A673 (cell line): ENCODE measurements at regions of chr7 and their contacts with region 1.

Region 1: GRCh38 chr7:98021588-98022351 is 31.8 kb upstream of the OCM2 start:
- DNase-seq: peak; percentile 79
- H3K4me3 ChIP-seq: no peak overlapping the region
- H3K27ac ChIP-seq: no peak overlapping the region
- H3K4me1 ChIP-seq: no peaks in the 10 kb centered on the region
- H3K27me3 ChIP-seq: no peaks in the 10 kb centered on the region
- CTCF ChIP-seq: peak; percentile 96

Region 2: DNA sequence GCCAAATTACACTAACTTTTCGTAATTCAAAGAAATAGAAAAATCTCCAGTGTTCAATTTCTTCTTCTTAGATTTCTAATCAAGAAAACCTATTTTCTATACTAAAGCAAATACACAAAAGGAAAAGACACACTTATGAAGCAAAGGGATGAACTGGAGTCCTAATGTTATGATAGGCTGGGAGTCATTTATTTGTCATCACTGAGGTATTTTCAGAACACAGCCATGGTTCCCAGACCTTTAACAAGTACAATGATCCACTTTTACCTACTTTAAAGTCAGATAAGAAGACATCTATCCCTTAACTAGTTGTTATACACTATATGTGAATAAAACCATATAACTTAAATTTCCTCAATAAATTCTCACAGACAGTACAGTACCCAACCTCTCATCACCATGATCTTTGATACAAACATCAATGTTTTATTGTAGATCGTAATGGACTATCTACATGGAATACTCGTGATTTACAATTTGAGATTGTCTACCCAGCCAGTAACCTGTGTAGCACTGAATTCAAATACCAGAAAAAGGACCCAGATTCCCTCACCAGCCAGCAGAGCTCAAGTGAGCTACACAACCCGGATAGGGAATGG is 162.1 kb before region 1 on chr7:
- CTCF ChIA-PET with region 1: no interaction called
- POLR2A ChIA-PET with region 1: no interaction called
- intact Hi-C with region 1: no loop called
- DNase-seq: no peak
- H3K4me3 ChIP-seq: no peak overlapping the region
- H3K27ac ChIP-seq: no peak overlapping the region
- H3K4me1 ChIP-seq: no peaks in the 10 kb centered on the region
- H3K27me3 ChIP-seq: no peaks in the 10 kb centered on the region
- CTCF ChIP-seq: no peak

Region 3: DNA sequence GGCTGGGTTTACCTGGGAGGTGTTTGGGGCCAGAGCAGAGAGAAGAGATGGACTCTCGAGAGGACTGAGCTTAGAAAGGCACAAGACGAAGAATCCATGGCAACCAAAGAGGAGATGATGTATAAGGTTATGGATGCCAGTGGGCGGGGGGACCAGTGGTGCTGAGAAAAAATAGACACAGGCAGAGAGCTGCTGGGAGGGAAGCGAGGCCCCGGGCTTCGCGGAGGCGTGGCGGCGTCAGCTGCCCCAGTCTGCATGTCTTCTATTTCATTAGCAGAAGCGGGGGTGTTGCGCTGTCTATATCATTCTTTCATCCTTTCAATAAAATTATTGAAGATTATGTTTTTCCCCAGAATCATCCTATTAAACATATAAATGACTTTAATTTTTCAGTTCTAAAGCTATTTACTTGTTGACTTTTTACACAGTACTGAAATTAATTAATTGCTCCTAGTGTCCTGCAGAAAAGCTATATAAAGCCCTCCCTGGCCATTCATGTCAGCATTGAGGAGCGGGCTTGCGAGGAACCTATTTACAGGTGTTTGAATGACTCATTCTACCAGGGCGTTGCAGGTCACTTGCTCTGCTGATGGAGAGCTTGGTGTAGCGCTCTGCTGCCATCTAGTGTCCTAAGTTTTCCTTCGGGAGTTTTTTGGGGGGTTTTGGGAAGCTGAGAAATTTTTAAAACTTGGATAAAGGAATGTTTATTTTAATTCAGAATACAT is 146.6 kb after region 1 on chr7:
- CTCF ChIA-PET with region 1: interaction called, 86 read pairs
- POLR2A ChIA-PET with region 1: interaction called, 3 read pairs
- intact Hi-C with region 1: loop called (anchors 1 kb)
- DNase-seq: peak; percentile 52
- H3K4me3 ChIP-seq: no peak overlapping the region
- H3K27ac ChIP-seq: no peak overlapping the region
- H3K4me1 ChIP-seq: no peaks in the 10 kb centered on the region
- H3K27me3 ChIP-seq: no peaks in the 10 kb centered on the region
- CTCF ChIP-seq: peak; percentile 84